GM12878 (cell line): ENCODE measurements at regions of chr11 and their contacts with region 1.

Region 1: GRCh38 chr11:35391922-35392813 is 27.2 kb downstream of the SLC1A2 start:
- DNase-seq: peak; percentile 45
- ATAC-seq: peak; percentile 87
- H3K4me3 ChIP-seq: peak overlapping the region; percentile 21; the same call in 1 of the 2 replicates
- H3K27ac ChIP-seq: no peak overlapping the region
- H3K4me1 ChIP-seq: peaks cover 25% of the 10 kb centered on the region
- H3K27me3 ChIP-seq: no peaks in the 10 kb centered on the region; a peak in 1 of 4 replicates
- CTCF ChIP-seq: peak; percentile 84 to 93 (median 93); a peak in 5 of 6 replicates
- EP300 ChIP-seq: no peak
- POLR2A ChIP-seq: no peak
- RAD21 ChIP-seq: peak; percentile 99

Region 2: GRCh38 chr11:34512840-34513681 is 879.1 kb before region 1 on chr11:
- CTCF ChIA-PET with region 1: interaction called, 11 read pairs
- POLR2A ChIA-PET with region 1: no interaction called
- RAD21 ChIA-PET with region 1: interaction called, 4 read pairs
- SMC1A ChIA-PET with region 1: interaction called, 9 read pairs
- in situ Hi-C with region 1: loop called (anchors 10 kb)
- intact Hi-C with region 1: loop called (anchors 5 kb)
- DNase-seq: peak; percentile 7
- ATAC-seq: peak; percentile 100
- H3K4me3 ChIP-seq: no peak overlapping the region
- H3K27ac ChIP-seq: no peak overlapping the region
- H3K4me1 ChIP-seq: no peaks in the 10 kb centered on the region
- H3K27me3 ChIP-seq: no peaks in the 10 kb centered on the region
- CTCF ChIP-seq: peak; percentile 75 to 93 (median 86)
- EP300 ChIP-seq: no peak
- POLR2A ChIP-seq: no peak
- RAD21 ChIP-seq: peak; percentile 60

Region 3: DNA sequence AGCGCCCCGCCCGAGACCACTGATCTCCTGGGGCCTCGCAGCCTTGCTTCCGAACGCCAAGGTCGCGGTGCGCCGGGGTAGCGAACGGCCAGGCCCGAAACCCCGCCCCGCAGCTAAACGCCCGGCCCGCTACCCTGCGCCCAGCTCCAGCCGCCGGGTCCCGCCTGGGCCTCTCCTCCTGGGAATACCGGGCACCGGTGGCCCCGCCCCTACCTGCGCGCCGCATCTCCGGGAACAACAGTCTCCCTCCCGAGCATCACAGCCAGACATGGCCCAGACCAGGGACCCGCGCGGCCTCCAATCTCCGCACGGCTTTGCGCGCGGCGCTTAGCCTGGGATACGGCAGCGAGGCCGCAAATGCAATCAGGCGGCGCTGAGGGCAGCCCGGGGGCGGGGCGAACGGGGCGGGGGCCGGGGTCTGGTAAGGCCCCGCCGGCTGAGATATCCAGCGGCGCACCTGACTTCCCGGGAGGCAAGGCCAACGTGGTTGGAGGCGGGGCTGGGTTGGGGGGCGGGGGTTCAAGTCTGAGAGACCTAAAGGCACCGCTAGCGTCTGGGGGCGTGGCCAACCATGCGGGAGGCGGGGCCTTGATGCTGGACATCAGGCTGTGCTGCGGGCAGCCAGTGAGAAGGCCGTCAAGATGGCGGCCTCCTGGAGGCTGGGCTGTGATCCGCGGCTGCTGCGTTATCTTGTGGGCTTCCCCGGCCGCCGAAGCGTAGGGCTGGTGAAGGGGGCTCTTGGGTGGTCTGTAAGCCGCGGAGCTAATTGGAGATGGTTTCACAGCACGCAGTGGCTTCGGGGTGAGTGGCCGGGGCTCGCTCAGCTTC is 475.9 kb before region 1 on chr11 and contains the starts of genes APIP and PDHX:
- CTCF ChIA-PET with region 1: interaction called, 13 read pairs
- POLR2A ChIA-PET with region 1: no interaction called
- RAD21 ChIA-PET with region 1: interaction called, 3 read pairs
- SMC1A ChIA-PET with region 1: interaction called, 26 read pairs
- in situ Hi-C with region 1: loop called (anchors 5 kb)
- intact Hi-C with region 1: loop called (anchors 2 kb)
- DNase-seq: peak; percentile 92
- ATAC-seq: peak; percentile 96
- H3K4me3 ChIP-seq: peak within 1 kb of the TSS; percentile 99
- H3K27ac ChIP-seq: peak within 1 kb of the TSS; percentile 83
- H3K4me1 ChIP-seq: no peaks in the 10 kb centered on the region
- H3K27me3 ChIP-seq: no peaks in the 10 kb centered on the region
- CTCF ChIP-seq: no peak
- EP300 ChIP-seq: no peak
- POLR2A ChIP-seq: peak; percentile 99
- RAD21 ChIP-seq: no peak
- polyA plus RNA-seq, gene APIP: 85.4 to 87.1 TPM
- polyA plus RNA-seq, gene PDHX: 21.9 to 24.5 TPM

Region 4: GRCh38 chr11:34997952-34998528 is 394.1 kb before region 1 on chr11:
- CTCF ChIA-PET with region 1: interaction called, 122 read pairs
- POLR2A ChIA-PET with region 1: no interaction called
- RAD21 ChIA-PET with region 1: interaction called, 14 read pairs
- SMC1A ChIA-PET with region 1: interaction called, 51 read pairs
- in situ Hi-C with region 1: loop called (anchors 5 kb)
- intact Hi-C with region 1: loop called (anchors 1 kb)
- DNase-seq: no peak
- ATAC-seq: peak; percentile 74
- H3K4me3 ChIP-seq: no peak overlapping the region
- H3K27ac ChIP-seq: no peak overlapping the region
- H3K4me1 ChIP-seq: peaks cover 8% of the 10 kb centered on the region; the same call in 1 of the 2 replicates
- H3K27me3 ChIP-seq: no peaks in the 10 kb centered on the region
- CTCF ChIP-seq: peak; percentile 24 to 62 (median 41); a peak in 5 of 6 replicates
- EP300 ChIP-seq: no peak
- POLR2A ChIP-seq: no peak
- RAD21 ChIP-seq: peak; percentile 62

Region 5: DNA sequence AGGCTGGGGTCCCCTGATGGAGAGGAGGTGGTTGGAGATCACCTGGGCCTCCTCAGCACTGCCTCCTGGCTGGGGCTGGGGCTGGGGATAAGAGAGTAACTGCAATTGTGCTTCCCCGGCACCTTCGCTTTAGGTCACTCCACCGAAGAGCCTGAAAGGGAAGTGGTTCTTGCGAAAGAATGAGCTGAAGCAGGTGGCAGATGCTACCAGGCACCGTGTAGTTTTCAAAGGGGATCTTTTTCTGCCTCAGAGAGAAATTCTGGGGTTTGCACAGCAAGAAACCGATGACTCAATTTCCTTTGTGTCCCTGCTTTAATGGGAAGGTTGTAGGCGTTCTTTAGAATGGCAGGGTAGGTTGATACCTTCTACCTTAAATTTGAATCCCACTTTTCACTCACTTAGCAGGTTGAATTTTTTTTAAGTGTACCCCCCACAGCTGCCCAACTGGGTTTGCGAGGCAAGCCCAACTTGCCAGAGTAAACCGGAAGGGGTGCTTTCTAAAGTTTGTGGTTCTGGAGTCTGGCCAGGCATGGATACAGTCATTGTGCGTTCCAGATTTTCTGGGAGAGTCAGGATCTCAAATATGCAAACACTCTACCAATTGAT is 247.9 kb before region 1 on chr11:
- CTCF ChIA-PET with region 1: interaction called, 3 read pairs
- POLR2A ChIA-PET with region 1: no interaction called
- RAD21 ChIA-PET with region 1: no interaction called
- SMC1A ChIA-PET with region 1: interaction called, 7 read pairs
- in situ Hi-C with region 1: no loop called
- intact Hi-C with region 1: loop called (anchors 1 kb)
- DNase-seq: peak; percentile 85
- ATAC-seq: peak; percentile 67
- H3K4me3 ChIP-seq: peak overlapping the region; percentile 56
- H3K27ac ChIP-seq: peak overlapping the region; percentile 54
- H3K4me1 ChIP-seq: peaks cover 55% of the 10 kb centered on the region
- H3K27me3 ChIP-seq: no peaks in the 10 kb centered on the region
- CTCF ChIP-seq: peak in 2 of 3 experiments; percentile 18 to 22; a peak in 2 of 6 replicates
- EP300 ChIP-seq: peak; percentile 64 to 77; a peak in 3 of 4 replicates
- POLR2A ChIP-seq: 0 out of 2 replicates have a peak, but pooled peaks have one; percentile 52
- RAD21 ChIP-seq: peak; percentile 41; the same call in 1 of the 2 replicates

Region 6: GRCh38 chr11:35272391-35272902 is 119.7 kb before region 1 on chr11:
- CTCF ChIA-PET with region 1: interaction called, 4 read pairs
- POLR2A ChIA-PET with region 1: no interaction called
- RAD21 ChIA-PET with region 1: no interaction called
- SMC1A ChIA-PET with region 1: interaction called, 11 read pairs
- in situ Hi-C with region 1: no loop called
- intact Hi-C with region 1: loop called (anchors 1 kb)
- DNase-seq: peak; percentile 95
- ATAC-seq: peak; percentile 94
- H3K4me3 ChIP-seq: 0 out of 2 replicates have a peak overlapping the region, but pooled peaks have one; percentile 7
- H3K27ac ChIP-seq: peak overlapping the region; percentile 56
- H3K4me1 ChIP-seq: peaks cover 22% of the 10 kb centered on the region
- H3K27me3 ChIP-seq: no peaks in the 10 kb centered on the region
- CTCF ChIP-seq: peak; percentile 5 to 12 (median 10); a peak in 3 of 6 replicates
- EP300 ChIP-seq: peak; percentile 57 to 70; a peak in 2 of 4 replicates
- POLR2A ChIP-seq: no peak
- RAD21 ChIP-seq: peak; percentile 22; the same call in 1 of the 2 replicates

Region 7: GRCh38 chr11:35330931-35331330 is 61.2 kb before region 1 on chr11:
- CTCF ChIA-PET with region 1: interaction called, 17 read pairs
- POLR2A ChIA-PET with region 1: no interaction called
- RAD21 ChIA-PET with region 1: interaction called, 20 read pairs
- SMC1A ChIA-PET with region 1: interaction called, 12 read pairs
- in situ Hi-C with region 1: no loop called
- intact Hi-C with region 1: no loop called
- DNase-seq: no peak
- ATAC-seq: peak; percentile 47
- H3K4me3 ChIP-seq: no peak overlapping the region
- H3K27ac ChIP-seq: no peak overlapping the region
- H3K4me1 ChIP-seq: peaks cover 26% of the 10 kb centered on the region
- H3K27me3 ChIP-seq: no peaks in the 10 kb centered on the region
- CTCF ChIP-seq: no peak
- EP300 ChIP-seq: no peak
- POLR2A ChIP-seq: 0 out of 2 replicates have a peak, but pooled peaks have one; percentile 22
- RAD21 ChIP-seq: no peak